Calu3 (cell line): ENCODE measurements at regions of chr19 and their contacts with region 1.

Region 1: GRCh38 chr19:52139252-52140031 is at the start of gene ZNF616:
- DNase-seq: peak; percentile 99
- H3K4me3 Mint-ChIP-seq: peak within 1 kb of the TSS; percentile 84
- H3K27ac Mint-ChIP-seq: peak within 1 kb of the TSS; percentile 71
- H3K4me1 Mint-ChIP-seq: peaks cover 11% of the 10 kb centered on the region
- H3K27me3 Mint-ChIP-seq: no peaks in the 10 kb centered on the region
- CTCF ChIP-seq: peak; percentile 91
- total RNA-seq, gene ZNF616: 8.9 and 9.2 TPM in 2 replicates

Region 2: DNA sequence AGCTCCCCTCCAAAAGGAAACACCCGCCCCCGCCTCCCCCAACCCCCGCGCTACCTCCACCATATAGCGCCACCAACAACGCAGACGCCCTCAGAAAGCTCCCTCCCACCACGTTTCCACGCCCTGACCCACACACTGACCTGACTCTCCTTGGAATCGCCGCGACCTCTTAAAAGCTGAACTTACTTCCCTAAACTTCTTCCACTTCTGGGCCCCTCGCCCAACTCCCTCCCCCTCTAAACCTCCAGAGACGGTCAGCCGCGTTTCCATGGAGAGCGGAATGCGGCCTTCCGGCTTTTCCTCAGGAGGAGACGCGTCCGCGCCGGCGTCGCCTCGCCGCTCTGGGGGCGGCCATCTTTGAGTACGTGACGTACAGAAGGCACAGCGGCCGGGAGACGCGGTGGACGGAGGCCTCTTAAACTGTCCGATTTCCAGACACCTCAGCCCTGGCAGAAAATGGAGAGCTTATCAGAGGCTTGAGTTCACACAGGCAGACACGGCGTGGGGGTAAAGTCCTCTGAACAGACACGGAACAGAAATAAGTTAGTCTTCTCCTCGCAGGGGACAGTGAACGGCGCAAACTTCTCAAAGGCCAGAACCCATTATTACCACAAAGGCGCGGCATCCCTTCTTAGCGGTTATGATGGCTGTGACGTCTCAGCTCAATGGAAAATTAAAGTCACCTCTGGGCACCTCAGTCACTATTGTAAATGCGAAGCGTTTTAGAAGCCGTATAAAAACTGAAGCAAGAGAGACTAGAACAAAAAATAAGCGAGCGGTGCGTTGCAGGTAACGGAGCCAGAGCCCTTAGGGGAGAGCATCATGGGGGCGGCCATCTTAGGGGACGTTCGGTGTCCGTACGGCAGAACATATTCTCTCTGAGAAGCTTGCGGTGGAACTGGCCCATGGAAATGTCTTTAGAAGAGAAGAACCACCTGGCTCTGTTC is 90.6 kb before region 1 on chr19 and contains the start of gene ZNF432:
- CTCF ChIA-PET with region 1: no interaction called
- intact Hi-C with region 1: loop called (anchors 5 kb)
- DNase-seq: peak; percentile 90
- H3K4me3 Mint-ChIP-seq: peak within 1 kb of the TSS; percentile 74
- H3K27ac Mint-ChIP-seq: peak within 1 kb of the TSS; percentile 76
- H3K4me1 Mint-ChIP-seq: no peaks in the 10 kb centered on the region
- H3K27me3 Mint-ChIP-seq: no peaks in the 10 kb centered on the region
- CTCF ChIP-seq: no peak
- total RNA-seq, gene ZNF432: 16.0 TPM in 2 replicates

Region 3: GRCh38 chr19:52110737-52111136 is 28.7 kb before region 1 on chr19:
- CTCF ChIA-PET with region 1: no interaction called
- intact Hi-C with region 1: no loop called
- DNase-seq: no peak
- H3K4me3 Mint-ChIP-seq: no peak overlapping the region
- H3K27ac Mint-ChIP-seq: no peak overlapping the region
- H3K4me1 Mint-ChIP-seq: no peaks in the 10 kb centered on the region
- H3K27me3 Mint-ChIP-seq: no peaks in the 10 kb centered on the region
- CTCF ChIP-seq: no peak

Region 4: GRCh38 chr19:52171321-52172169 is 32.1 kb after region 1 on chr19 and contains the start of gene ZNF836:
- CTCF ChIA-PET with region 1: no interaction called
- intact Hi-C with region 1: loop called (anchors 1 kb)
- DNase-seq: peak; percentile 91
- H3K4me3 Mint-ChIP-seq: peak within 1 kb of the TSS; percentile 85
- H3K27ac Mint-ChIP-seq: peak within 1 kb of the TSS; percentile 94
- H3K4me1 Mint-ChIP-seq: peaks cover 12% of the 10 kb centered on the region
- H3K27me3 Mint-ChIP-seq: no peaks in the 10 kb centered on the region
- CTCF ChIP-seq: no peak
- total RNA-seq, gene ZNF836: 11.3 and 12.0 TPM in 2 replicates

Region 5: GRCh38 chr19:52189735-52190486 is 50.5 kb after region 1 on chr19 and contains the start of gene PPP2R1A:
- CTCF ChIA-PET with region 1: interaction called, 11 read pairs
- intact Hi-C with region 1: loop called (anchors 1 kb)
- DNase-seq: peak; percentile 98
- H3K4me3 Mint-ChIP-seq: peak within 1 kb of the TSS; percentile 97
- H3K27ac Mint-ChIP-seq: peak within 1 kb of the TSS; percentile 100
- H3K4me1 Mint-ChIP-seq: peaks cover 23% of the 10 kb centered on the region
- H3K27me3 Mint-ChIP-seq: no peaks in the 10 kb centered on the region
- CTCF ChIP-seq: no peak
- total RNA-seq, gene PPP2R1A: 288 and 291 TPM in 2 replicates

Region 6: GRCh38 chr19:52237771-52238400 is 98.4 kb after region 1 on chr19:
- CTCF ChIA-PET with region 1: interaction called, 4 read pairs
- intact Hi-C with region 1: loop called (anchors 1 kb)
- DNase-seq: peak; percentile 63
- H3K4me3 Mint-ChIP-seq: no peak overlapping the region
- H3K27ac Mint-ChIP-seq: no peak overlapping the region
- H3K4me1 Mint-ChIP-seq: no peaks in the 10 kb centered on the region
- H3K27me3 Mint-ChIP-seq: no peaks in the 10 kb centered on the region
- CTCF ChIP-seq: peak; percentile 70